Calu3 (cell line): ENCODE measurements at regions of chr2 and their contacts with region 1.

Region 1: DNA sequence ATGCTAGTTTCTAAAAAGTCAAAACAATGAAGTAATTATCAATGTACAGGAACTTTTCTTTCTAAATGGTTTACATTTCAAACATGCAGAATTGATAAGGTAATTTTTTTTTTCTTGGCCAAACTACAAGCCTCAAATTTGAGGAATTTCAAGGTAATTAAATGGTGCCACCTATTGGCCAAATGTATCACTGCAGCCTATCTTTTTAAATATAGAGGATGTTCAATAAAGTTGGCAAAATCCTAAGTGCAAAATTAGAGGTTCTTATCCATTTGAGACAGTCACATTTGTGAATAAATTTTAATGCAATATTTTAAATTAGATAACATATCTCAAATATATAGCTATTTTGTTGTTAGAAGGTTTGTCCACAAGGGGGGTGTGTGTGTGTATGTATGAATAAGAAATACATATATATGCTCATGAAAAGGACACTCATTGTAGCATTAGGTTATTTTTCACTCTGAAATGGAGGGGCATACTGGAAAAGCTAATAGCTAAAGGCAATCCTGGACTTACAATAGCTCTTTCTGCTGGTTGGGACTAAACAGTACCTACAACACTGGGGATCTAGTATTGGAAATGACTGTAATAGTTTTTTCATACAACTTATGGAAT is 26.2 kb downstream of the MMADHC start:
- DNase-seq: peak; percentile 39
- H3K4me3 Mint-ChIP-seq: no peak overlapping the region
- H3K27ac Mint-ChIP-seq: no peak overlapping the region
- H3K4me1 Mint-ChIP-seq: peaks cover 9% of the 10 kb centered on the region
- H3K27me3 Mint-ChIP-seq: no peaks in the 10 kb centered on the region
- CTCF ChIP-seq: peak; percentile 58

Region 2: DNA sequence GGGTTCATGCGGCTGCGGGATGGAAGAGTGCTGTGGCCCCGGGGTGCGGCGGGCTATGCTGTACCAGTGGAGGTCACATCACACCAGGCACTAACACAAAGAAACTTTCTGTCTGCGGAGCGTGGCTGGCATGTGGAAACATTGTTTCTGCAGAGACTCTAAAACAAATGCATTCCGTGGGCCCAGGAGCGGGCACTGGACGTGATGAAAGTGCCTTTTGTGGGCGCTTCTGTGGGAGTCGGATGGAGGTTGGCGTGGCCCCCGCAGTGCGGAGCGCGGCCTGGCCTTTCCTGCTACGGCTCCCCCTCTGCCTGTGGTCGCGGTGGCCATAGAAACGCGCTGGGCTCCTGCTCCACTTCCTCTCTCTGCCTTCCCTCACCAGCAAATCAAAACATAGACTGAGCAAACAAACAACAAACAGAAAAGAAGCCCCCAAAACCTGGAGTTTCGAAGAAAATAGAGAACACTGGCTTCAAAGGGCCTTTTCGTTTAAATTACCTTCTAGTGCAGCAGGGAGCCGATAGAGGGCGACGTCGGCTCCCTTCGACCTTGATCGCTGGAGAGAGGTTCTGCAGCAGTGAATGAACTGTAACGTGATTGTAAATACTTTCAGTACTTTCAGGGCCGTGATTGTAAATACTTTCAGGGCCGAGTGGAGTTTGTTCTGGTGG is 635.0 kb before region 1 on chr2:
- CTCF ChIA-PET with region 1: no interaction called
- intact Hi-C with region 1: loop called (anchors 5 kb)
- DNase-seq: peak; percentile 58
- H3K4me3 Mint-ChIP-seq: peak overlapping the region; percentile 68
- H3K27ac Mint-ChIP-seq: no peak overlapping the region
- H3K4me1 Mint-ChIP-seq: peaks cover 11% of the 10 kb centered on the region
- H3K27me3 Mint-ChIP-seq: peaks cover 7% of the 10 kb centered on the region
- CTCF ChIP-seq: peak; percentile 50

Region 3: DNA sequence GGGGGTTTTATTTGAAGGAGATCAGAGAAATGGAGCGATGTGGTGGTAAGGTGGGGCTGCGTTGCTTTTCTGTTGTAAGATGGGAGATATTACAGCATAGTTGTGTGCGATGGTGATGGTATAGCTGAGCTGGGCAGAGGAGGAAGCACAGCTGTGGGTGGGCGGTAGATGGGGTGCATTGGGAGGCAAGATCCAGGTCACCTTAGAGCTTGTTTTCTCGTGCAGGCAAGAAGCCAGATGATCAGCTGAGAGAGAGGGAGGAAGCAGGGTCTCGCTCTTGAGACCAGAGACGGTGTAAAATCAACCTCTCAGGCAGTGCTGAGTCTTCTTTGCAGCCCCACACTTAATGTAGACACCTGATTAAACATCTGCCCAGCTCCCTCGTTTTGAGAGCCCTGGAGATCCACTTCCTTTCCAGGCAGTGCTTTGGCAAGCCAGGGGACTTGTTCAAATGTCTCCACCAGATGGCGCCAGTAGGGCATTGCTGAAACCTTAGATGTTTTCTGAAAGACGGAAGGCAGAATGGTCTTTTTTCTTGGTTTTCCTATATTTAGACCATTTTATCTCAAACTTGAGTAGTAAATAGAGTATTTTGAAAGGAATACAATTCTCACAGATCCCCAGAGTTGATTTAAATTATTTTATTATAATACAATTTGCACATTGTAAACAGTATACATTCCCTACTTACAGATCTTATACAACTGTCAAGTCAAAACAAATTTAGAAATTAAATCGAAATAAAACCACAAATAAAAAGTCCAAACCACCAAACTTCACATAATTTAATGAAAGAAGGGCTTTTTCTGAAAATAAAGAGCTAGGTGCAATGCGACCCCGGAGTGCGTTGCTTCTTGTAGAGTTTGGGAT is 544.1 kb before region 1 on chr2:
- CTCF ChIA-PET with region 1: interaction called, 3 read pairs
- intact Hi-C with region 1: loop called (anchors 1 kb)
- DNase-seq: peak; percentile 82
- H3K4me3 Mint-ChIP-seq: no peak overlapping the region
- H3K27ac Mint-ChIP-seq: no peak overlapping the region
- H3K4me1 Mint-ChIP-seq: peaks cover 22% of the 10 kb centered on the region
- H3K27me3 Mint-ChIP-seq: peaks cover 27% of the 10 kb centered on the region
- CTCF ChIP-seq: peak; percentile 51

Region 4: DNA sequence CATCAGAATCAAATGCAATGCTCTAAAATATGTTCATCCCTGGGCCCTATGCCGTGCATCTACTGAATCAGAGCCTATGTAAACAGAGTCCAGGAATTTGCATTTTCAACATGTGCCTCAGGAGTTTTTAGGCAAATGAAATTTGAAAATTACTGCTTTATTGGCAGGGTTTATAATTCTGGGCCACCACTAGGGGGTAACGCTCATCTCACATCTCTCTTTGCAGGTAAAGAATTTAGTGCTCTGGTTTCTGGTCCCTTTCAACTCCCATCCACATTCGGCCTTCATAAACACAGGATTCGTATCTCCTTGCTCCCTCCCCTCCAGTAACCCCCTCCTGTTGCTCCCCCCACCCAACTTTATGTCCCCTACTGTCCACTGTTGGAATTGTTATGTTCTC is 473.7 kb before region 1 on chr2:
- CTCF ChIA-PET with region 1: no interaction called
- intact Hi-C with region 1: loop called (anchors 5 kb)
- DNase-seq: peak; percentile 13
- H3K4me3 Mint-ChIP-seq: no peak overlapping the region
- H3K27ac Mint-ChIP-seq: no peak overlapping the region
- H3K4me1 Mint-ChIP-seq: no peaks in the 10 kb centered on the region
- H3K27me3 Mint-ChIP-seq: peaks cover 29% of the 10 kb centered on the region
- CTCF ChIP-seq: no peak

Region 5: GRCh38 chr2:149330126-149331022 is 231.0 kb before region 1 on chr2 and contains the start of gene LYPD6:
- CTCF ChIA-PET with region 1: no interaction called
- intact Hi-C with region 1: loop called (anchors 1 kb)
- DNase-seq: peak; percentile 83
- H3K4me3 Mint-ChIP-seq: peak within 1 kb of the TSS; percentile 97
- H3K27ac Mint-ChIP-seq: peak within 1 kb of the TSS; percentile 85
- H3K4me1 Mint-ChIP-seq: peaks cover 8% of the 10 kb centered on the region
- H3K27me3 Mint-ChIP-seq: peaks cover 25% of the 10 kb centered on the region
- CTCF ChIP-seq: no peak
- total RNA-seq, gene LYPD6: 3.4 and 3.9 TPM in 2 replicates

Region 6: GRCh38 chr2:149422339-149423309 is 138.8 kb before region 1 on chr2:
- CTCF ChIA-PET with region 1: no interaction called
- intact Hi-C with region 1: loop called (anchors 10 kb)
- DNase-seq: peak; percentile 49
- H3K4me3 Mint-ChIP-seq: no peak overlapping the region
- H3K27ac Mint-ChIP-seq: peak overlapping the region; percentile 21
- H3K4me1 Mint-ChIP-seq: peaks cover 27% of the 10 kb centered on the region
- H3K27me3 Mint-ChIP-seq: no peaks in the 10 kb centered on the region
- CTCF ChIP-seq: no peak